ENCODE measurements at regions of chr5 and their contacts with region 1.

Region 1: GRCh38 chr5:173315495-173316350 is 12.5 kb downstream of the STC2 start:
- DNase-seq: no peak
- H3K4me3 ChIP-seq: no peak overlapping the region
- H3K27ac ChIP-seq: peak overlapping the region; percentile 43; the same call in 1 of the 2 replicates
- H3K4me1 ChIP-seq: peaks cover 0 to 9% (median 2%) of the 10 kb centered on the region in 4 experiments; a peak in 6 of 7 replicates
- H3K27me3 ChIP-seq: no peaks in the 10 kb centered on the region
- CTCF ChIP-seq: no peak
- EP300 ChIP-seq: no peak
- POLR2A ChIP-seq: peak; percentile 58 to 65
- RAD21 ChIP-seq: no peak

Region 2: GRCh38 chr5:173114536-173114935 is 201.2 kb before region 1 on chr5:
- CTCF ChIA-PET with region 1: no interaction called
- POLR2A ChIA-PET with region 1: no interaction called
- DNase-seq: no peak
- H3K4me3 ChIP-seq: no peak overlapping the region
- H3K27ac ChIP-seq: no peak overlapping the region
- H3K4me1 ChIP-seq: no peaks in the 10 kb centered on the region
- H3K27me3 ChIP-seq: no peaks in the 10 kb centered on the region
- CTCF ChIP-seq: no peak
- EP300 ChIP-seq: no peak
- POLR2A ChIP-seq: no peak
- RAD21 ChIP-seq: no peak

Region 3: DNA sequence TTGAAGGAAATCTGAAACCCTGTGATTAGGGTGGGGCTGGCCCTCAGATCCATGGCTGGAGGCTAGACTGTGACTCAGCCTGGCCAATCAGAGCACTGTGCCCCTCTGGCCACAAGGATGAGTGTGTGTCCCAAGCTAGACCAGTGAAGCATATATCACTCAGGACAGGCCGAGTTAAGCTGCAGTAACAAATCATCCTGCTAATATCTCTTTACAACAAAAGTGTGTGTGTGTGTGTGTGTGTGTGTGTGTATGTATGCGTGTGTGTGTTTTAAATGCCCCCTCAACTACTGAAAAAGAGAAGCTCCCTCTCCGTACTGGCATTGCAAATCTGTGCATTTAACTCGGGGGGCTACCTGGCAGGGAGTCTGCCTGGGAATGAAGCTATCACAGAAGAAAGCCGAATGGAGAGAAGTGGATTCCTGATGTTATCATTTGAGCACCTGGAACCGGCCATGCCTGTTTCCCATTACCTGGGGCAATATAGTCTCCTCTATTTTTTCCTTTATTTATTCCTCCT is 13.1 kb before region 1 on chr5:
- CTCF ChIA-PET with region 1: interaction called, 126 read pairs
- POLR2A ChIA-PET with region 1: interaction called, 536 read pairs
- DNase-seq: no peak
- H3K4me3 ChIP-seq: no peak overlapping the region
- H3K27ac ChIP-seq: no peak overlapping the region
- H3K4me1 ChIP-seq: peaks cover 15 to 32% (median 23%) of the 10 kb centered on the region in 4 experiments
- H3K27me3 ChIP-seq: no peaks in the 10 kb centered on the region; a peak in 4 of 7 replicates
- CTCF ChIP-seq: no peak
- EP300 ChIP-seq: no peak
- POLR2A ChIP-seq: no peak
- RAD21 ChIP-seq: no peak

Measured in H1 (cell line).